RWPE1 (cell line): ENCODE measurements at regions of chr2 and their contacts with region 1.

Region 1: DNA sequence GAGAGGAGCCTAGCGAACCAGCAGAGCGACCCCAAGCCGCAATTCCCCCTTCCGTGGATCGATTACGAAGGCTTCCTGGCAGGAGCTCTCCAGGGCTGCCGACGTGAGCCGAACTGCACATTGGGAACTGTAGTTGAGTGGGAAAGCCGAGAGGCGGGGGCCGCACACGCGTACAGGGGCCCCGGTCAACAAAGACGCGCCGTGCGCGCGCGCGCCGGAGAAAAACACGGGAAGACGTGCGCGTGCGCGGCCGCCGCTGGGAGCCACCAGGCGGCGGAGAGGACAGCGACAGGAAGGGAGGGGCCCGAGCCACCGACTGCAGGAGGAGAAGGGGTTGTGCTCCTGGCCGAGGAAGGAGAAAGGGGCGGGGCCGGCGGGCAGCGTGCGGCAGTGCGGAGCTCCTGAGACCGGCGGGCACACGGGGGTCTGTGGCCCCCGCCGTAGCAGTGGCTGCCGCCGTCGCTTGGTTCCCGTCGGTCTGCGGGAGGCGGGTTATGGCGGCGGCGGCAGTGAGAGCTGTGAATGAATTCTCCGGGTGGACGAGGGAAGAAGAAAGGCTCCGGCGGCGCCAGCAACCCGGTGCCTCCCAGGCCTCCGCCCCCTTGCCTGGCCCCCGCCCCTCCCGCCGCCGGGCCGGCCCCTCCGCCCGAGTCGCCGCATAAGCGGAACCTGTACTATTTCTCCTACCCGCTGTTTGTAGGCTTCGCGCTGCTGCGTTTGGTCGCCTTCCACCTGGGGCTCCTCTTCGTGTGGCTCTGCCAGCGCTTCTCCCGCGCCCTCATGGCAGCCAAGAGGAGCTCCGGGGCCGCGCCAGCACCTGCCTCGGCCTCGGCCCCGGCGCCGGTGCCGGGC is at the start of gene SPAST:
- DNase-seq: peak; percentile 97
- H3K27ac ChIP-seq: peak within 1 kb of the TSS; percentile 94
- CTCF ChIP-seq: 0 out of 2 replicates have a peak, but pooled peaks have one; percentile 11

Region 2: DNA sequence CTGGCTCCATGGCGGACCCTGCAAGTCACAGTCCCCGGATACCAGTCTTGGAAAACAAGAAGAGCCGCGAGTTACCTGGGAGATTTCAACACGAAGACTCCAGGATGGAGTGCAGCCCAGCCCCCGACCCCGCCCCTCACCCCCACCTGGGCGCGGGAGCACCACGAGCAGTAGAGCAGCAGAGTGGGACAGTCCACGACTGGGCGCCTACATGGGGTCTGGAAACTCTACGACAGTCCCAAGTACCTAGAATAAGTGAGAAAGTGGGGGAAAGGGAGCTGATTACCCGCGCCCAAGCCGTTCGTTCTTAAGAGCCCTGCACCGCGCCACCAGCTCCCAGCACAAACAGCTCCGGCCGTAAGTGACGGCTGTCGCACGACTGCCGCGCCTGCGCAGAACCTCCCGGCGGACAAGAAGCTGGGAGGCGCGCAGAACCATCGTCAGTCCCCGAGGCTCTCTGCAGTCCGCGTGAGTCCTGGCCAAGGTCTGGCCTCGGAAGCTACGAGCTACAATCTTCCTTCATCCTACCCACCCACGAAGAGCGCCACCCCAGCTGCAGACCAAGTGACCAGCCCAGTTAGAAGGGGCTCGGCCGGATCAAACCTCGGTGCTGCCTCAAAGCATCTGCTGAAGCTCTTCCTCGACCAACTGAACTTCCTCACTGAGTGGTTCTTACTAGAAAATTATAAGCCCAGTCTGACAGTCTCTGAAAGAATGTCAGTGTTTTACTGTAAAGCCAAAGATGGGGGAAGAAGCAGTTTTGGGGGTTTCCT is 23.9 kb before region 1 on chr2 and contains the start of gene DPY30:
- CTCF ChIA-PET with region 1: no interaction called
- POLR2A ChIA-PET with region 1: interaction called, 14 read pairs
- DNase-seq: peak; percentile 86
- H3K27ac ChIP-seq: peak within 1 kb of the TSS; percentile 88
- CTCF ChIP-seq: no peak